ENCODE measurements at regions of chr19 and their contacts with region 1.

Region 1: GRCh38 chr19:40529093-40529954 is 47.3 kb upstream of the SHKBP1 start:
- DNase-seq: peak; percentile 64
- H3K4me3 ChIP-seq: peak overlapping the region; percentile 28 to 29 (median 29)
- H3K27ac ChIP-seq: no peak overlapping the region
- H3K4me1 ChIP-seq: peaks cover 3% of the 10 kb centered on the region
- H3K27me3 ChIP-seq: no peaks in the 10 kb centered on the region
- CTCF ChIP-seq: peak; percentile 72 to 96

Region 2: DNA sequence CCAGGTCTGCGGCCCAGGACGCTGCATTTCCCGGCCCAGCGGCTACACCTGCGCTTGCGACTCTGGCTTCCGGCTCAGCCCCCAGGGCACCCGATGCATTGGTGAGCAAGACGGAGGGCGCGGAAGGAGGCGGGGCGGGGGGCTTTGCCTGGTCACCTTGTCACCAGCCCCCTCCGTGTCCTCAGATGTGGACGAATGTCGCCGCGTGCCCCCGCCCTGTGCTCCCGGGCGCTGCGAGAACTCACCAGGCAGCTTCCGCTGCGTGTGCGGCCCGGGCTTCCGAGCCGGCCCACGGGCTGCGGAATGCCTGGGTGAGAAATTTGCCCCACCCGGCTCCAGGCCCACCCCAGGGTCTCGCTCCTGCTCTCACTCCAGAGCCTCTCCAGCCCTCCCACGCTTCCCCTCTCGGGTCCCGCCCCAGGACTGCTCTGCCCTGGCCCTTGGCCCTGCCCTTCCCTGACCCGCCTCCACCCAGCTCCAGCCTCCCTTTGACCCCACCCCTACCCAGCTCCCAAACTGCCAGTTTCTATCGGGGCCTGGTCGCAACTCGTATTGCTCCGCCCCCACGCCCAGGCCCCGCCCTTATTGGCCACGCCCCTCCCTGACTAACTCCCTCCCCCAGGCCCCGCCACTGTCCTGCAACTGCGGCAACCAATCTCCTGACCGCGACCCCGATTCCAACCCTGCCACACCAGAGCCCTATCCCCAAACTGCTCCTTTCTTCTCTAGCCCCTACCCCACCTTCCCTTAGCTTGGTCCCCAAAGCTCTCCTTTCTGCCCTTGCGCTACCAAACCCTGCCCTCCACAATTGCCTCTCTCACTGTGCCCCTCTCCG is 80.5 kb after region 1 on chr19:
- CTCF ChIA-PET with region 1: interaction called, 20 read pairs
- dilution Hi-C with region 1: no loop called
- in situ Hi-C with region 1: no loop called
- intact Hi-C with region 1: no loop called
- DNase-seq: peak; percentile 92
- H3K4me3 ChIP-seq: peak overlapping the region; percentile 49 to 63 (median 63)
- H3K27ac ChIP-seq: peak overlapping the region; percentile 74
- H3K4me1 ChIP-seq: peaks cover 63% of the 10 kb centered on the region
- H3K27me3 ChIP-seq: no peaks in the 10 kb centered on the region
- CTCF ChIP-seq: no peak

Region 3: GRCh38 chr19:40690693-40691420 is 161.5 kb after region 1 on chr19:
- CTCF ChIA-PET with region 1: no interaction called
- dilution Hi-C with region 1: no loop called
- in situ Hi-C with region 1: no loop called
- intact Hi-C with region 1: no loop called
- DNase-seq: peak; percentile 86
- H3K4me3 ChIP-seq: peak overlapping the region; percentile 29 to 61 (median 39)
- H3K27ac ChIP-seq: peak overlapping the region; percentile 50
- H3K4me1 ChIP-seq: peaks cover 18% of the 10 kb centered on the region
- H3K27me3 ChIP-seq: no peaks in the 10 kb centered on the region
- CTCF ChIP-seq: no peak

Measured in mammary epithelial cell (primary cell).